ENCODE measurements at regions of chr15 and their contacts with region 1.

Region 1: DNA sequence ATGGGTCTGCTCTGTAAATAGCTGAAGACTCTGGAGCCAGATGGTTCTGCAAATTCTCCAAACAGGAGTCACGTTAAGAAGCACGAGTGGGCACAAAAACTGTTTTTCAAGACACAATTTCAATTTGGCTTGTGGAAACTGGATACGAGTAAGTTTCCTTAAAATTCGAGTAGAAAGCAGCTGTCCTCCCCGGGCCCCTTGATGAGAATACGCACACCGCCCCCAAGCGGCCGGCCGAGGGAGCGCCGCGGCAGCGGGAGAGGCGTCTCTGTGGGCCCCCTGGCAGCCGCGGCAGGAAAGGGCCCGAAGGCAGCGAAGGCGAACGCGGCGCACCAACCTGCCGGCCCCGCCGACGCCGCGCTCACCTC is 778 bp upstream of the THBS1 start:
- DNase-seq: peak; percentile 87
- CTCF ChIP-seq: peak; percentile 96

Region 2: DNA sequence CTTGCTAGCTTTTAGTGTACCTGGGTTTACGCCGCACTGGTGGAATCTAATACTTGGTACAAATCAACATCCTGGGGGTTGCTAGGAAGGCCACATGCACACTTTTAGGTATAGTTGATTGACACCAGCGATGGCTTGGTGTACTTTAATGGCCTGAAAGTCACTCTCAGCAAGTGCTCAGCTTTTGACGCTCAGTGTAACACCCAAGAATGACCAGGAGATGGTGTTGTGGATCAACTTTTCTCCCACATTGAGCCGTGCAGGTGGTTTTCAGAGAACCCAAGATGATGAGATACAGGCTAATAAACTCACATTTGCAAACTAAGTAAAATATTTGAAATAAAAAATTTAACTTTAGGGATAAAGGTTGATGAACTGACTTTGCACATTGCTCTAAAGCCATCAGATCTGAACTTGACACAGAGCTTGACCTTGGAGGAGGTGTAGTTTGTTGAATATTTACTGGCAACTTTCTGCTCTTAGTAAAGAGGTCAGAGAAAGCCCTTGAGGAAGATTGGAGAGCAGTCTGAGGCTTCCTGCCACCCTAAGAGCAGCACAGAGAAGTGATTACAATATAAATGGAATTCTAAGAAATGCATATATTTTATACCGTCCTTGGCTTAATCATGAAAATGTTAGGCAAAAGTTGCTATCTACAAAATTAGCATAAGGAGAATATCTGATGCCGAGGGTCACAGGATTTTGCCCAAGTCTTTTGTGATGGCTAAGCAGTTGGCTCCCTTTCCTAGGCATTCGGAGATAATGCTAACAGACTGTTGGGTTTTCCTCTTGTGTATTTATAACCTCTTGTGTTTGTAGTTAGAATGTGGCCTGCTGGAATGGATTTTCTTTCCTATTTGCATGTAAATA is 872.1 kb before region 1 on chr15:
- CTCF ChIA-PET with region 1: interaction called, 10 read pairs
- POLR2A ChIA-PET with region 1: no interaction called
- DNase-seq: peak; percentile 52
- CTCF ChIP-seq: peak; percentile 61

Region 3: GRCh38 chr15:39125904-39126303 is 454.2 kb before region 1 on chr15:
- CTCF ChIA-PET with region 1: interaction called, 11 read pairs
- POLR2A ChIA-PET with region 1: no interaction called
- DNase-seq: peak; percentile 47
- CTCF ChIP-seq: peak; percentile 64

Region 4: DNA sequence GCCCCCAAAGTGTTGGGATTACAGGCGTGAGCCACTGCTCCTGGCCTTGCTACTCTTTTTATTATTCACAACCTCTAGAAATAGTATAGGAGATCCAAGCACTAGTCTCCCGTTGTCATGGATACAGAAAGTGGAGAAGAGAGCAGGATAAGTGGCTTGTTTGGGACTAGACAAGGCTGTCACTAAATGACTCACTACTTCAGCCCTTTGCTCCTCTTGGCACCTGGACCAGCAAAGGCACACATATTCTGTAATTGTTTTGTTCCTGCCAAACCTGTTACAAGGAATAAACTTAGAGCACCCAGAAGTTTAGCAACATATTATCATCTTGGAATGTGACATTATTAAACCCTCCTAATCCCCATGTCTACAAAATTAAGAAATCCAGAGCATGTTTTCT is 426.4 kb before region 1 on chr15:
- CTCF ChIA-PET with region 1: no interaction called
- POLR2A ChIA-PET with region 1: no interaction called
- DNase-seq: no peak
- CTCF ChIP-seq: no peak

Region 5: DNA sequence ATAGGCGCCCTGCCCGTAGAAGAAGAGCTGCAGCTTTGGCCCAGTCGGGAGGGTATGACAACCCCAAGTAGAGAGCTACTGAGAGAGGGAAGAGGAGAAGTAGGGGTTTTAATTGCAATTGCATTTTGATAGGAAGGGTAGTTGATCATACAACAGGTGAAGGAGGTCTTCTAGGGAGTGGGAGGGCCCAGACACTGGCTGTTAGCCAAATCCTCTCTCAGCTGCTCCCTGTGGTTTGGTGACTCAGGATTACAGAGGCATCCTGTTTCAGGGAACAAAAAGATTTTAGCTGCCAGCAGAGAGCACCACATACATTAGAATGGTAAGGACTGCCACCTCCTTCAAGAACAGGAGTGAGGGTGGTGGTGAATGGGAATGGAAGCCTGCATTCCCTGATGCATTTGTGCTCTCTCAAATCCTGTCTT is 408.1 kb before region 1 on chr15:
- CTCF ChIA-PET with region 1: interaction called, 12 read pairs
- POLR2A ChIA-PET with region 1: no interaction called
- DNase-seq: no peak
- CTCF ChIP-seq: no peak

Region 6: GRCh38 chr15:39594056-39594763 is 14.1 kb after region 1 on chr15:
- CTCF ChIA-PET with region 1: interaction called, 10 read pairs
- POLR2A ChIA-PET with region 1: no interaction called
- DNase-seq: no peak
- CTCF ChIP-seq: peak; percentile 28

Region 7: GRCh38 chr15:39616731-39617455 is 36.8 kb after region 1 on chr15:
- CTCF ChIA-PET with region 1: no interaction called
- POLR2A ChIA-PET with region 1: no interaction called
- DNase-seq: no peak
- CTCF ChIP-seq: no peak